CD4-positive, alpha-beta memory T cell (primary cell): ENCODE measurements at regions of chr2 and their contacts with region 1.

Region 1: GRCh38 chr2:48343571-48344440 is 186.1 kb upstream of the STON1 start:
- DNase-seq: peak; percentile 47 to 80 (median 62)
- H3K4me3 ChIP-seq: peak overlapping the region; percentile 13 to 26
- H3K4me3 Mint-ChIP-seq: peak overlapping the region; percentile 55 to 90 (median 78)
- H3K27ac ChIP-seq: peak overlapping the region; percentile 56
- H3K27ac Mint-ChIP-seq: peak overlapping the region; percentile 69 to 93 (median 84)
- H3K4me1 ChIP-seq: peaks cover 73% of the 10 kb centered on the region
- H3K4me1 Mint-ChIP-seq: peaks cover 28 to 54% (median 43%) of the 10 kb centered on the region in 4 donors
- H3K27me3 ChIP-seq: no peaks in the 10 kb centered on the region
- H3K27me3 Mint-ChIP-seq: no peaks in the 10 kb centered on the region

Region 2: DNA sequence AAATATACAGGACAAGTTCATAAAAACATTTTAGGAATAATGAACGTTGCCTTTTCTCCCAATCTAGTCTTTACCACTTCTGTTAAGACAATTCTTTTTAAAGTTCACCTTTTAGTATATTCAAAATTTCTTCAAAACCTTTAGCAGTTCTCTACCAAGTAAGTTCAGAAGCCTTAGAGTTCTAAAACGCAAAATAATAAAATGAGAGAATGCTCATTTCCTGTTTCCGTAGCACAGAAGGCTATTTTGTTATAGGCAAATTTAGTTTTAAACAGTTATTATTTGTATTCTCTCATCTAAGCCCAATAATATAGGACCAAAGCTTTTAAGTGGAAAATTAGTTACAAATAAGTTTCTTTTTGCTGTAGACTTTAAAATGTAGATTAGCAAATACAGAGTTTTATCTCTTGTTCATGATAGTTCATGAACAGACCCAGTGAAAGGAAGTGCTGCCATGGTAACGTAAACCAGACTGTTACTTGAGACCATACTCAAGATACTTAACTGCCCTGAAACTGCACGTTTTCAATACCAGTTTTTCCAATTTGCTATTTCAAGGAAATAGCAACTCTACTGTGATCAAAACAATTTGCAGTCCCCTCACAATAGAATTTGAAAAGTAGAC is 13.0 kb after region 1 on chr2:
- CTCF ChIA-PET with region 1: interaction called, 3 read pairs
- POLR2A ChIA-PET with region 1: interaction called, 3 read pairs
- intact Hi-C with region 1: loop called (anchors 1 kb)
- DNase-seq: peak; percentile 55 to 74 (median 69)
- H3K4me3 ChIP-seq: peak overlapping the region in 1 of 2 donors; percentile 30
- H3K4me3 Mint-ChIP-seq: peak overlapping the region; percentile 67 to 86 (median 75)
- H3K27ac ChIP-seq: peak overlapping the region; percentile 49
- H3K27ac Mint-ChIP-seq: peak overlapping the region; percentile 90 to 97 (median 95)
- H3K4me1 ChIP-seq: peaks cover 70% of the 10 kb centered on the region
- H3K4me1 Mint-ChIP-seq: peaks cover 49 to 63% (median 57%) of the 10 kb centered on the region in 4 donors
- H3K27me3 ChIP-seq: no peaks in the 10 kb centered on the region
- H3K27me3 Mint-ChIP-seq: no peaks in the 10 kb centered on the region

Region 3: DNA sequence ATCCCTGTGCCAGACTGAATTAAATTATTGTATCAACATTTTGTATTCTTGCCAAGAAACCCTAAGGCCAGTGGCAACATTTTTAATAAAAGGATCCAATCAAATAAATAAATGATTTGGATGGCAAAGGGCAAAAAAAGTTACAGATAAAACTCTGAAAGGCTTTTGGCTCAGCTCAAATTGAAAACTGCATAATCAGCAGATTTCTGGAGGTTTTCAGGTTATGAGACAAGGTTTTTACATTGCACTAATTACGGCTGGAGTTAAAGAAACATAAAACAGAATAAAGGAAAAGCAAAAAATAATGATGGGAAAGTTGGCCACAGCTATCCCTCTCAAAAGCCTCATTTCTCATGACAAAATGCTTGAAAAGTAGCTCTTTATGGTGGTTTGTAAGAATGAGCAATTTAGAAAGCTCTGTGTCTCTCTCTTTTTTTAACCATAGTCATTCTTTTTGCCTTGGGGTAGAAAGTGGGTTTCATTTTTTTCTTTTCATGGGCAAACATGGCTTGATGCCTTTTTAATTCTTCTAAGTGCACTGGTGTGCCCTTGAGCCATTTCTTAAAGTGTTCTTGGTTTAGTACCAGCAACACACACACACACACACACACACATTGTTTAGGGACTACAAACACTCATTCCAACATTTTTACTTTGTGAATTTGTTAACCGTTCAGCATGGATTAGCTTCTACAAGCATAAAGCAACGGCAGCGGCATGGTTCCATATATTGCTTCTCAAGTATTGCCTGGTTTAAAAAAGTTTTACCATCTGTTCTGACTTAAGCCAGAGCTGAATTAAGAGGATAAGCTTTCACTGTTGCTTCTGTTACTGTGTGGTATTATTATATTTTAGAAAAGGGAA is 1557.6 kb after region 1 on chr2:
- CTCF ChIA-PET with region 1: no interaction called
- POLR2A ChIA-PET with region 1: no interaction called
- intact Hi-C with region 1: no loop called
- DNase-seq: no peak
- H3K4me3 ChIP-seq: no peak overlapping the region
- H3K4me3 Mint-ChIP-seq: no peak overlapping the region
- H3K27ac ChIP-seq: no peak overlapping the region
- H3K27ac Mint-ChIP-seq: no peak overlapping the region
- H3K4me1 ChIP-seq: no peaks in the 10 kb centered on the region
- H3K4me1 Mint-ChIP-seq: no peaks in the 10 kb centered on the region
- H3K27me3 ChIP-seq: no peaks in the 10 kb centered on the region
- H3K27me3 Mint-ChIP-seq: no peaks in the 10 kb centered on the region